ENCODE measurements at regions of chr6 and their contacts with region 1.

Region 1: GRCh38 chr6:107847844-107848802 is 24.0 kb upstream of the SCML4 start:
- DNase-seq: peak; percentile 91
- ATAC-seq: peak; percentile 97

Region 2: DNA sequence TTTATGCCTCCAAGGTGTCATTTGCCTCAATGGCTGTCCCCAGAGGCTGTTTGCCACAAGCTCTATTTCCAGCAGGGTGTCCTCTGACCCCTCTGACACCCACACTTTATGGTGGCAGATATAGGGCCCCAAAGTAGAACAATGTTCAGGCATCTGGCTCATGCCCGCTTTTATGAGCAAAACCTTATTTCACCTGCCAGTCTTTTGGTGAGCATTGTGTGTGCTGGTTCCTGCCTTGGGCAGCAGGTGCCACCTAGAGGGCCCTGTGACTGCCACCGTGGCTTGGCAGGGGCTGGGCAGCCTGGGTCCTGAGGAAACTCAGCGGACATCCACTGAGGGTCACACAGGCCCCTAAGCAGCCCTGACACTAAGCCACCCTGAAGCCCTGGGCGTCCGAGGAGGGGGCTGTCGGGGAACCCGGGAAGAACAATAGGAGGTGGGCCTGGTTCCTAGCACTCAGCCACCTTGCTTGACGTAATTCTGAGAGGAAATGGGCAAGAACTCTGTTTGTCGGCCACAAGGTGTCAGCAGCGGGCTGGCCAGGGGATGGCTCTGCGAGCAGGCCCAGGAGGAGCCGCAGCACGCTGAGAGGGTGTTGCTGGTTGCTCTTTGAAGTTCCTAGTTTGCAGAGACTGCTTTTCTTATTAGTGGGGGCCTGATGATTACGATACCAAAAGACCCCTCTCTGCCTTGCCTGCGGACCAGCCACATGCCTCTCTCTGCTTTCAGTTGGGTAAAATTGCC is 173.0 kb before region 1 on chr6:
- intact Hi-C with region 1: loop called (anchors 1 kb)
- DNase-seq: peak; percentile 84
- ATAC-seq: peak; percentile 93

Region 3: GRCh38 chr6:107704347-107705013 is 143.6 kb before region 1 on chr6:
- intact Hi-C with region 1: loop called (anchors 10 kb)
- DNase-seq: no peak
- ATAC-seq: peak; percentile 61

Region 4: GRCh38 chr6:107740496-107741190 is 107.5 kb before region 1 on chr6:
- intact Hi-C with region 1: no loop called
- DNase-seq: no peak
- ATAC-seq: no peak